ENCODE measurements at regions of chrX and their contacts with region 1.

Region 1: GRCh38 chrX:51144852-51145442 is 187.7 kb upstream of the NUDT10 start:
- DNase-seq: no peak
- ATAC-seq: peak; percentile 79
- H3K4me3 ChIP-seq: no peak overlapping the region
- H3K27ac ChIP-seq: no peak overlapping the region
- H3K4me1 ChIP-seq: no peaks in the 10 kb centered on the region
- H3K27me3 ChIP-seq: no peaks in the 10 kb centered on the region
- CTCF ChIP-seq: peak; percentile 18 to 66 (median 66); a peak in 5 of 6 replicates
- POLR2A ChIP-seq: no peak
- RAD21 ChIP-seq: peak; percentile 27

Region 2: DNA sequence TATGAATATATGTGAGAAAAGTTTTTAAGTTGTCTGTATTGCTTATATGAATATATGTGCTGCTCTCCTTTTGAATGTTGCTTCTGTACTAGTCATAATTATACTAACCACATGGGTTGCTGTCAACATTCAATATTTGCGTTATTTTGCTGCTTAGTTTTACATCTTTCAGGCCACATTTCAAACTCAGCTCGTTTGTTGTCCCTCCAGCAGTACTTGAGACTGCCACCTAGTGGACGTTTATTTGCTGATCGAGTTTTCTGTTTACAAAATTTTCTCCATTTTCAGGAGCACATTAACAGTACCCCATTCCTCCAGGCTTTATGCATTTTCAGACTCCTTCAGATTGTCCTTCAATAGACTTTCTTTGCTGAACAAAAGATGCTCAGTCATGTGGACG is 275.7 kb after region 1 on chrX:
- CTCF ChIA-PET with region 1: interaction called, 11 read pairs
- POLR2A ChIA-PET with region 1: no interaction called
- RAD21 ChIA-PET with region 1: no interaction called
- intact Hi-C with region 1: loop called (anchors 10 kb)
- DNase-seq: peak; percentile 23
- ATAC-seq: peak; percentile 55
- H3K4me3 ChIP-seq: no peak overlapping the region
- H3K27ac ChIP-seq: no peak overlapping the region
- H3K4me1 ChIP-seq: no peaks in the 10 kb centered on the region
- H3K27me3 ChIP-seq: no peaks in the 10 kb centered on the region
- CTCF ChIP-seq: peak; percentile 25 to 62 (median 50); a peak in 5 of 6 replicates
- POLR2A ChIP-seq: no peak
- RAD21 ChIP-seq: peak; percentile 25; the same call in 1 of the 2 replicates

Region 3: GRCh38 chrX:51461053-51462044 is 316.4 kb after region 1 on chrX:
- CTCF ChIA-PET with region 1: interaction called, 22 read pairs
- POLR2A ChIA-PET with region 1: no interaction called
- RAD21 ChIA-PET with region 1: no interaction called
- intact Hi-C with region 1: loop called (anchors 2 kb)
- DNase-seq: peak; percentile 7
- ATAC-seq: no peak
- H3K4me3 ChIP-seq: no peak overlapping the region
- H3K27ac ChIP-seq: no peak overlapping the region
- H3K4me1 ChIP-seq: no peaks in the 10 kb centered on the region
- H3K27me3 ChIP-seq: no peaks in the 10 kb centered on the region
- CTCF ChIP-seq: peak in 2 of 3 experiments; percentile 42 to 59; a peak in 4 of 6 replicates
- POLR2A ChIP-seq: no peak
- RAD21 ChIP-seq: peak; percentile 29; the same call in 1 of the 2 replicates